ENCODE measurements at regions of chr12 and their contacts with region 1.

Region 1: GRCh38 chr12:53424626-53425514 is 1.2 kb downstream of the AMHR2 start:
- DNase-seq: no peak
- H3K4me3 ChIP-seq: no peak overlapping the region
- H3K4me3 Mint-ChIP-seq: no peak overlapping the region
- H3K27ac Mint-ChIP-seq: no peak overlapping the region
- H3K4me1 ChIP-seq: peaks cover 15% of the 10 kb centered on the region
- H3K4me1 Mint-ChIP-seq: peaks cover 24% of the 10 kb centered on the region
- H3K27me3 ChIP-seq: no peaks in the 10 kb centered on the region
- H3K27me3 Mint-ChIP-seq: no peaks in the 10 kb centered on the region
- CTCF ChIP-seq: no peak

Region 2: GRCh38 chr12:53344824-53345485 is 79.9 kb before region 1 on chr12:
- CTCF ChIA-PET with region 1: interaction called, 22 read pairs
- POLR2A ChIA-PET with region 1: no interaction called
- intact Hi-C with region 1: no loop called
- DNase-seq: peak; percentile 73 to 84
- H3K4me3 ChIP-seq: peak overlapping the region; percentile 69
- H3K4me3 Mint-ChIP-seq: peak overlapping the region; percentile 97
- H3K27ac Mint-ChIP-seq: peak overlapping the region; percentile 77
- H3K4me1 ChIP-seq: no peaks in the 10 kb centered on the region
- H3K4me1 Mint-ChIP-seq: peaks cover 6% of the 10 kb centered on the region
- H3K27me3 ChIP-seq: no peaks in the 10 kb centered on the region
- H3K27me3 Mint-ChIP-seq: no peaks in the 10 kb centered on the region
- CTCF ChIP-seq: peak; percentile 64 to 91

Region 3: GRCh38 chr12:53352331-53353256 is 72.3 kb before region 1 on chr12:
- CTCF ChIA-PET with region 1: interaction called, 94 read pairs
- POLR2A ChIA-PET with region 1: interaction called, 11 read pairs
- intact Hi-C with region 1: loop called (anchors 1 kb)
- DNase-seq: peak; percentile 87 to 88
- H3K4me3 ChIP-seq: no peak overlapping the region
- H3K4me3 Mint-ChIP-seq: no peak overlapping the region
- H3K27ac Mint-ChIP-seq: peak overlapping the region; percentile 52
- H3K4me1 ChIP-seq: peaks cover 5% of the 10 kb centered on the region
- H3K4me1 Mint-ChIP-seq: peaks cover 10% of the 10 kb centered on the region
- H3K27me3 ChIP-seq: no peaks in the 10 kb centered on the region
- H3K27me3 Mint-ChIP-seq: no peaks in the 10 kb centered on the region
- CTCF ChIP-seq: peak; percentile 77 to 78

Region 4: DNA sequence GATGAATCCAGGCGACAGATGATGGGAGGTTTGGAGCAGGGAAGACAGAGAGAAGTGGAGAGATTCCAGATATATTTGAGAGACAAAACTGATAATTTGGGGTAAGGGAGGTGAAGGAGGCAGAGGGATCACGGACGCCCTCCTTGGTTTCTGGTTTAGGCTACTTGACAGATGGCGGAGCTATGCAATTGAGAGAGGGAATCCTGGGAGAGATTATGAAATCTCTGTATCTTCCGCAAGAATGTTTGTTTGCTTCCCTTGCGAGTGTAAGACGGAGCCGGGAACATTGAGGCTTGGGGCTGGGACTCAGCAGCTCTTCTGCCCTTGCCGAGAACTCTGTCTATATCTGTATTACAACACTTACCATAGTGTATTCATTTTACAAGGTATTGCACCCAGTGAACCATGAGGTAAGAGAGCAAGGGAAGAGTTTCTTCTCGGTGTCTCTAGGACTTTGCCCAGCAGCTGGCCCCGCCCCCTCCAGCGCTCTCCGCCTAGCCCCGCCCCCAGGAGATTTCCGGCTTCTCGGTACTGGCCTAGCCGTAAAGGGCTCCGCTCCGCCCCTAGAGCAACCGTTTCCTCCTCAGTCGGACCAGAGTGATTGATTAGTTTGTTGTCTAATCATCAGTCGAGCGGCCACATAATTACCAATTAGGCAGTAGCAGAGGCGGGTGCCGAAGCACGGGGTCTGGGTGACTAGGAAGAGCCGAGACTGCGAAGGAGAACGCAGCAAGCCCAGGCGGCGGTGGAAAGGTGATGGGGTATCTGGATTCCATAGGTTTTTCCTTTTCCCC is 16.4 kb after region 1 on chr12 and contains the start of gene PRR13:
- CTCF ChIA-PET with region 1: interaction called, 22 read pairs
- POLR2A ChIA-PET with region 1: interaction called, 3 read pairs
- intact Hi-C with region 1: loop called (anchors 1 kb)
- DNase-seq: peak; percentile 98 to 99
- H3K4me3 ChIP-seq: peak within 1 kb of the TSS; percentile 69
- H3K4me3 Mint-ChIP-seq: peak within 1 kb of the TSS; percentile 85
- H3K27ac Mint-ChIP-seq: peak within 1 kb of the TSS; percentile 98
- H3K4me1 ChIP-seq: peaks cover 30% of the 10 kb centered on the region
- H3K4me1 Mint-ChIP-seq: peaks cover 26% of the 10 kb centered on the region
- H3K27me3 ChIP-seq: no peaks in the 10 kb centered on the region
- H3K27me3 Mint-ChIP-seq: no peaks in the 10 kb centered on the region
- CTCF ChIP-seq: no peak
- total RNA-seq, gene PRR13: 395 and 400 TPM in 2 replicates

Region 5: GRCh38 chr12:53508534-53509199 is 83.8 kb after region 1 on chr12:
- CTCF ChIA-PET with region 1: interaction called, 7 read pairs
- POLR2A ChIA-PET with region 1: no interaction called
- intact Hi-C with region 1: loop called (anchors 1 kb)
- DNase-seq: peak; percentile 80 to 88
- H3K4me3 ChIP-seq: no peak overlapping the region
- H3K4me3 Mint-ChIP-seq: no peak overlapping the region
- H3K27ac Mint-ChIP-seq: no peak overlapping the region
- H3K4me1 ChIP-seq: no peaks in the 10 kb centered on the region
- H3K4me1 Mint-ChIP-seq: no peaks in the 10 kb centered on the region
- H3K27me3 ChIP-seq: no peaks in the 10 kb centered on the region
- H3K27me3 Mint-ChIP-seq: no peaks in the 10 kb centered on the region
- CTCF ChIP-seq: peak; percentile 81 to 91

Measured in Caco-2 (cell line).